HCT116 (cell line): ENCODE measurements at regions of chr9 and their contacts with region 1.

Region 1: DNA sequence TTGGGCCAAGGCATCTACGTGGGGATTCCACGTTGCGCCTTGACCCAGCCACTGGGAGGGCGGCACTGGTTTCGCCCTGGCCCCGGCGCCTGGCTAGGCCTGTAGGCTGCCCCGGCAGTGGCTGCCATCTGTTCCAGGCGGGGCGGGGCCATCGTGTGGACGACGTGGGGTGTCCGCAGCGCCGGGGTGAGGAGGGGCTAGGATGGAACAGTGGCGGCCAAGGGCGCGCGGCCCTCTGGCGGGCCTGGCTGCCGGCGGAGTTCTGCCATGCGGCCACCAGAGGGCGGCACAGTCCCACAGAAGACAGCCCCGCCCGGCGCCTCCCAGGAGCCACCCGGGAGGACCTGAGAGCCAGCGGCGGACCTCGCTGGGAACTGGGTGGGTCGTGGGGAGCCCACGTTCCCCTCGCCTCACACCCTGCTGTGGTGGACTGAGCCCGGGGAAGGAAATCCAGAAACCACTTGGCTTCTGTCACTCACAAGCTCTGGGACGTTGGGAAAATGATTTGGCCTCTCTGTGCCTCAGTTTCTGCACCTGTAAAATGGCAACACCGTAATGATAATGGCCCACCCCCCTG is 22.6 kb upstream of the RAPGEF1 start:
- DNase-seq: peak; percentile 43
- ATAC-seq: peak; percentile 100
- H3K4me3 ChIP-seq: peak overlapping the region in 1 of 2 experiments; percentile 20; a peak in 2 of 4 replicates
- H3K27ac ChIP-seq: no peak overlapping the region
- H3K4me1 ChIP-seq: peaks cover 4 to 9% of the 10 kb centered on the region in 2 experiments; a peak in 3 of 4 replicates
- H3K27me3 ChIP-seq: peaks cover 6% of the 10 kb centered on the region; the same call in 1 of the 2 replicates
- CTCF ChIP-seq: peak; percentile 71 to 88 (median 73)
- POLR2A ChIP-seq: no peak
- RAD21 ChIP-seq: peak; percentile 97

Region 2: GRCh38 chr9:131954299-131954698 is 191.9 kb after region 1 on chr9:
- CTCF ChIA-PET with region 1: no interaction called
- POLR2A ChIA-PET with region 1: no interaction called
- RAD21 ChIA-PET with region 1: no interaction called
- intact Hi-C with region 1: loop called (anchors 10 kb)
- DNase-seq: peak; percentile 3
- ATAC-seq: peak; percentile 81
- H3K4me3 ChIP-seq: no peak overlapping the region
- H3K27ac ChIP-seq: no peak overlapping the region
- H3K4me1 ChIP-seq: no peaks in the 10 kb centered on the region
- H3K27me3 ChIP-seq: no peaks in the 10 kb centered on the region
- CTCF ChIP-seq: peak; percentile 31 to 66 (median 60); a peak in 5 of 6 replicates
- POLR2A ChIP-seq: no peak
- RAD21 ChIP-seq: peak; percentile 43

Region 3: DNA sequence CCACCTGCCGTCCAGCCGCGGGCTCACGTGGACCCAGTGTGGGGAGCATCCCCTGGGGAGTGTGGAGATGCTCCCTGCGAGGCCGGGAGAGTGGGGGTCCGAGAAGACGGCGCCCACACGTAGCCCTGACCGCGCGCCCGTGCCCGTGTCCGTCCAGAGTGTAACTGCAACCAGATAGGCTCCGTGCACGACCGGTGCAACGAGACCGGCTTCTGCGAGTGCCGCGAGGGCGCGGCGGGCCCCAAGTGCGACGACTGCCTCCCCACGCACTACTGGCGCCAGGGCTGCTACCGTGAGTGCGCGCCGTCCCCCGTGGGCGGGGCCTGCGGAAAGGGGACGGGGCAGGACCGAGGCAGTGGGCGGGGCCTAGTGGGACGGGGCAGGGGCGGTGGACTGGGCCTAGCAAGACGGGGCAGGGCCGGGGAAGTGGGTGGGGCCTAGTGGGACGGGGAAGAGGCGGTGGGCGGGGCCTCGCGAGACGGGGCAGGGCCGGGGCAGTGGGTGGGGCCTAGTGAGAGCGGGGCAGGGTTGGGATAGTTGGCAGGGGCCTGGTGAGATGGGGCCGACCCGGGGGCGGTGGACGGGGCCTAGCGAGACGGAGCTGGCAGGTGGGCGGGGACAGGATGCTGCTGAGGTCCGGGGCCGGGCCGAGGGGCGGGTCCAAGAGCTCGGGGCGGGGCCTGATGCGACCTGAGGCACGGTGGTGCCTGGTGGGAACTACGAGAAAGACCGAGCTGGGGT is 478.5 kb after region 1 on chr9:
- CTCF ChIA-PET with region 1: interaction called, 9 read pairs
- POLR2A ChIA-PET with region 1: no interaction called
- RAD21 ChIA-PET with region 1: interaction called in 1 of 2 experiments, 4 read pairs
- intact Hi-C with region 1: loop called (anchors 1 kb)
- DNase-seq: peak; percentile 93
- ATAC-seq: peak; percentile 90
- H3K4me3 ChIP-seq: peak overlapping the region; percentile 56 to 69
- H3K27ac ChIP-seq: peak overlapping the region; percentile 56; the same call in 1 of the 2 replicates
- H3K4me1 ChIP-seq: peaks cover 13 to 38% of the 10 kb centered on the region in 2 experiments
- H3K27me3 ChIP-seq: no peaks in the 10 kb centered on the region
- CTCF ChIP-seq: no peak
- POLR2A ChIP-seq: no peak
- RAD21 ChIP-seq: no peak

Region 4: GRCh38 chr9:132260846-132261245 is 498.4 kb after region 1 on chr9:
- CTCF ChIA-PET with region 1: interaction called, 13 read pairs
- POLR2A ChIA-PET with region 1: no interaction called
- RAD21 ChIA-PET with region 1: no interaction called
- intact Hi-C with region 1: loop called (anchors 5 kb)
- DNase-seq: no peak
- ATAC-seq: no peak
- H3K4me3 ChIP-seq: no peak overlapping the region
- H3K27ac ChIP-seq: no peak overlapping the region
- H3K4me1 ChIP-seq: peaks cover 0 to 11% of the 10 kb centered on the region in 2 experiments; a peak in 2 of 4 replicates
- H3K27me3 ChIP-seq: no peaks in the 10 kb centered on the region
- CTCF ChIP-seq: no peak
- POLR2A ChIP-seq: no peak
- RAD21 ChIP-seq: no peak

Region 5: GRCh38 chr9:132395560-132395959 is 633.1 kb after region 1 on chr9:
- CTCF ChIA-PET with region 1: no interaction called
- POLR2A ChIA-PET with region 1: no interaction called
- RAD21 ChIA-PET with region 1: no interaction called
- intact Hi-C with region 1: loop called (anchors 5 kb)
- DNase-seq: no peak
- ATAC-seq: no peak
- H3K4me3 ChIP-seq: no peak overlapping the region
- H3K27ac ChIP-seq: no peak overlapping the region
- H3K4me1 ChIP-seq: no peaks in the 10 kb centered on the region
- H3K27me3 ChIP-seq: no peaks in the 10 kb centered on the region
- CTCF ChIP-seq: no peak
- POLR2A ChIP-seq: no peak
- RAD21 ChIP-seq: no peak